CD4-positive, alpha-beta memory T cell (primary cell): ENCODE measurements at regions of chr10 and their contacts with region 1.

Region 1: GRCh38 chr10:101782811-101783735 is at the start of gene NPM3:
- DNase-seq: peak; percentile 70 to 85 (median 73)
- H3K4me3 ChIP-seq: peak within 1 kb of the TSS; percentile 74 to 75
- H3K4me3 Mint-ChIP-seq: peak within 1 kb of the TSS; percentile 99 to 100 (median 100)
- H3K27ac ChIP-seq: peak within 1 kb of the TSS; percentile 58
- H3K27ac Mint-ChIP-seq: peak within 1 kb of the TSS; percentile 87 to 99 (median 96)
- H3K4me1 ChIP-seq: peaks cover 64% of the 10 kb centered on the region
- H3K4me1 Mint-ChIP-seq: peaks cover 38 to 76% (median 59%) of the 10 kb centered on the region in 4 donors
- H3K27me3 ChIP-seq: peaks cover 12% of the 10 kb centered on the region
- H3K27me3 Mint-ChIP-seq: peaks cover 6 to 7% of the 10 kb centered on the region in 2 donors
- total RNA-seq, gene NPM3: 11.1 to 12.4 TPM

Region 2: DNA sequence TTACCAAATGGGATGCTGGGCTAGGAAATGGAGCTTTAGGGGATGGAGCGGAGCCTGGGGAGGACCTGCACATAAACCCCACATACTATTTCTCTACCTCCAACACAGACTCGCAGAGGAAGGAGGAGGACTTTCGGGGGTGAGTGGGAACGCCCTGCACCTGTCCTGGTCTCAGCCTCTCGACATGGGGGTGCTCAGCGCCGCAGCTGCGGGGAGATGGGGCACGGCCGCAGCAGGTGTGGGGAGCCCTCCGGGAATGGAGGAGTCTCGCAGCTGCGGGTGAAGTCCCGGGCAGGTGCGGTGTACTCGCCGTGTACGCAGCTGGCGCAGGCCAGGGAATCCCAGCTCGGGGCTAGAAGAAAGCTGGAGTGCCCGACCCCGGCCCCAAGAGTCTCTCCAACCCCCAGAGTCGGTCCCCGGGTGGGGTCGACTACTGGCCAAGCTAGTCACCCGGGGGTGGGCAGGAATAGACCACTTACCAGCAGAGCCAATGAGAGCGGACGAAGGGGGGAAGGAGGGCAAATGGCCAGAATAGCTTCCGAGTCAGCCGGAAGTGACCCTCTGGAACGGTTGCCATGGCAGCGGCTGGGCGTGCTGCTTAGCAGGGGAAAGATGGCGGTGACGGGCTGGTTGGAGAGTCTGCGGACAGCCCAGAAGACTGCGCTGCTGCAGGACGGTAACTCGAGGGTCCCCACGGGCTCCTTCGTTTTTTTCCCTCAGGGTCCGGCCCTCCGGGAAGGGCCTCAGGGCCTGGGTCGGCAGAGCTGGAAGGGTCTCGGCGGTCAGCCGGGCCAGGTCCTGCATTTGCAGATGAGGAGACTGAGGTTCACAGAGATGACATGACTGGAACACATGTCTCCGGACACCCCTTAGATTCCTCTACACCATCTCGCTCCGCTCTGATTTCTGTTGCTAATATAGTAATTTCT is 195.1 kb before region 1 on chr10 and contains the starts of genes DPCD and POLL:
- CTCF ChIA-PET with region 1: no interaction called
- POLR2A ChIA-PET with region 1: no interaction called
- intact Hi-C with region 1: loop called (anchors 5 kb)
- DNase-seq: peak; percentile 83 to 86 (median 85)
- H3K4me3 ChIP-seq: peak within 1 kb of the TSS; percentile 79 to 81
- H3K4me3 Mint-ChIP-seq: peak within 1 kb of the TSS; percentile 94 to 97 (median 94)
- H3K27ac ChIP-seq: peak within 1 kb of the TSS; percentile 64
- H3K27ac Mint-ChIP-seq: peak within 1 kb of the TSS; percentile 82 to 93 (median 91)
- H3K4me1 ChIP-seq: peaks cover 17% of the 10 kb centered on the region
- H3K4me1 Mint-ChIP-seq: peaks cover 11 to 40% (median 26%) of the 10 kb centered on the region in 4 donors
- H3K27me3 ChIP-seq: no peaks in the 10 kb centered on the region
- H3K27me3 Mint-ChIP-seq: no peaks in the 10 kb centered on the region
- total RNA-seq, gene DPCD: 1.0 to 1.2 TPM
- total RNA-seq, gene POLL: 57.0 to 59.3 TPM

Region 3: GRCh38 chr10:101631821-101632475 is 151.1 kb before region 1 on chr10:
- CTCF ChIA-PET with region 1: no interaction called
- POLR2A ChIA-PET with region 1: no interaction called
- intact Hi-C with region 1: no loop called
- DNase-seq: no peak
- H3K4me3 ChIP-seq: no peak overlapping the region
- H3K4me3 Mint-ChIP-seq: no peak overlapping the region
- H3K27ac ChIP-seq: no peak overlapping the region
- H3K27ac Mint-ChIP-seq: peak overlapping the region in 1 of 7 donors; percentile 71
- H3K4me1 ChIP-seq: no peaks in the 10 kb centered on the region
- H3K4me1 Mint-ChIP-seq: peaks cover 16 to 35% (median 20%) of the 10 kb centered on the region in 4 donors
- H3K27me3 ChIP-seq: no peaks in the 10 kb centered on the region
- H3K27me3 Mint-ChIP-seq: no peaks in the 10 kb centered on the region

Region 4: DNA sequence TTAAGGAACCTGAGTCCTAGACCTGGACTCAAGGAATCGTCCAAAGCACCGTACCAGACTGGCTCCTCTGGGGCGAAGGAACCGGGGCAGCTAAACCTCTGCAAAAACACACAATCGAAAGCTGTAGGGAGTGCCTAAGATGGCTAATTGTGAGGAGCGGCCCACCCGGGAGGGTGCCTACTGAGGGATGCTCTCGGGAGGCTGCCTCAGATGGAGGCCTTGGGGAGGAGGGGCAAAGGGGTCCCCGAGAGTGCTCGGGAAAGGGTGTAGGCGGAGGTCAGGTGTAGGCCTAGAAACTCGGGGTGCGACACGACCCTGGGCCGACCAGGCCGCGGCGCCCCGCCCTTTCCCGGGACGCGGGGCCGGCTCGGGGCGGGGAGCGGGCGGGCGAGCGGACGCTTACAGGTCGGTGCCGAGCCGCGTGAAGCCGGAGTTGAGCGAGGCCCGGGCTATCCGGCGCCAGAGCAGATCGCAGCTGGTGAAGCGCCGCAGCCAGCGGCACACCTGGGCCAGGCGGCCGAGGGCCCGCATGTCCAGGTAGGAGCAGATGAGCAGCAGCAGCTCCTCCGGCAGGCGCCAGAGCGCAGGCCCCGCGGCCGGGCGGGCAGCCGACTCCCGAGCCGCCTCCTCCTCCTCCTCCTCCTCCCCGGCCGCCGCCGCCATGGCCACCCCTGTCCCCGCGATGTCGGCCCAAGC is 88.9 kb before region 1 on chr10:
- CTCF ChIA-PET with region 1: interaction called, 4 read pairs
- POLR2A ChIA-PET with region 1: no interaction called
- intact Hi-C with region 1: loop called (anchors 2 kb)
- DNase-seq: peak; percentile 71 to 76 (median 72)
- H3K4me3 ChIP-seq: peak overlapping the region; percentile 86 to 87
- H3K4me3 Mint-ChIP-seq: peak overlapping the region; percentile 93 to 99 (median 96)
- H3K27ac ChIP-seq: peak overlapping the region; percentile 99
- H3K27ac Mint-ChIP-seq: peak overlapping the region; percentile 97 to 99 (median 99)
- H3K4me1 ChIP-seq: peaks cover 46% of the 10 kb centered on the region
- H3K4me1 Mint-ChIP-seq: peaks cover 32 to 60% (median 41%) of the 10 kb centered on the region in 4 donors
- H3K27me3 ChIP-seq: no peaks in the 10 kb centered on the region
- H3K27me3 Mint-ChIP-seq: no peaks in the 10 kb centered on the region

Region 5: DNA sequence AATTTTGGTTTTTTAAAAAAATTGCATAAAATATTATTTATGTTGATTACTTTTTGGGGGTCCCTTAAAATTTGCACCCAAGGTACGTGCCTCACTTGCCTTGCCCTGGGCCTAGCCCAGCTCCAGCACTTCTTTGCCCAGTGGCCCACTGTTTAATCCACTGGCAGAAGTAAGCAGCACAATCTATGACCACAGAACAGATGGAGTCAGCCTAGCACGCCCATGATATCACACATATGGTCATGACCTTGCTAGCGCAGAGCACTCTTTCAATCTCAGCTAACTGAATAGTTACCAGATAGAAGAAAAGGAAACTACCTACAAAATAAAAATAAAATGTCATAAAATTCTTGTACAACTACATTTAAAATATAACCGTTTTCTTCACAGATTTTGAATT is 29.5 kb after region 1 on chr10:
- CTCF ChIA-PET with region 1: interaction called, 35 read pairs
- POLR2A ChIA-PET with region 1: interaction called, 64 read pairs
- intact Hi-C with region 1: no loop called
- DNase-seq: no peak
- H3K4me3 ChIP-seq: no peak overlapping the region
- H3K4me3 Mint-ChIP-seq: peak overlapping the region in 5 of 8 donors; percentile 13 to 100 (median 44)
- H3K27ac ChIP-seq: no peak overlapping the region
- H3K27ac Mint-ChIP-seq: peak overlapping the region in 2 of 7 donors; percentile 29 to 91
- H3K4me1 ChIP-seq: peaks cover 61% of the 10 kb centered on the region
- H3K4me1 Mint-ChIP-seq: peaks cover 37 to 63% (median 44%) of the 10 kb centered on the region in 4 donors
- H3K27me3 ChIP-seq: no peaks in the 10 kb centered on the region
- H3K27me3 Mint-ChIP-seq: no peaks in the 10 kb centered on the region

Region 6: DNA sequence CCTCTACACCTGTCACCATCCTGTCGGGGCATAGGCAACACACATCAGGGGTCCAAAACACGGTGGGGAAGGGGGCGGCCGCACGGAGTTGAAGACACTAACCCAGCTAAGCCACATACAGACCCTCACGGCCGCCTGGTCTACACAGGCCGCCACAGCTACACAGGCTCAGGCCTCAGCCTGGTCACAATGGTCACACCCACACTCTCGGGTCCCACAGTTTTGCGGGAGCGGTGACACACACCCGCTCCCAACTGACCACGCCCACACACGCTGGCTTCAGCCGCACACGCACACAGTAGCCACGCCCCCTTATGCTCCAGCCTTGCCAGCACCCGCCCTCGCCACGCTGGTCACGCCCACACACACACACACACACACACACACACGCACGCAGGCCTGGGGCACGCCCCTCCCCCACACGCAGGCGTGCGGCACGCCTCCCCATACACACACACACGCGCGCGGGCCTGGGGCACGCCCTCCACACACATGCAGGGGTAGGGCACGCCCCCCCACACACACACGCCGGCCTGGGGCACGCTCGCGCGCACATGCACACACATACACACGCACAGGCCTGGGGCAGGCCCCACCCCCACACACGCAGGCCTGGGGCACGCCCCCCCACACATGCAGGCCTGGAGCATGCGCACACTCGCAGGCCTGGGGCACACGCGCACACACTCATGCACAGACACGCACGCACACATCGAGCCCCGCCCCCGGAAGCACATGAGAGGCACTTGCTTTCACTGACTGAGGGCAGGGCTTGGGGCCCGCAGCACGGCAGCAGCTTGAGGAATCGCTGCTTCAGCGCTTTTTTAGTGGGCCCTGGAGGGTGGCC is 47.5 kb after region 1 on chr10:
- CTCF ChIA-PET with region 1: interaction called, 4 read pairs
- POLR2A ChIA-PET with region 1: interaction called, 13 read pairs
- intact Hi-C with region 1: no loop called
- DNase-seq: peak; percentile 95 to 98 (median 97)
- H3K4me3 ChIP-seq: peak overlapping the region; percentile 57 to 68
- H3K4me3 Mint-ChIP-seq: peak overlapping the region; percentile 84 to 93 (median 88)
- H3K27ac ChIP-seq: peak overlapping the region; percentile 87
- H3K27ac Mint-ChIP-seq: peak overlapping the region; percentile 98 to 100 (median 99)
- H3K4me1 ChIP-seq: peaks cover 59% of the 10 kb centered on the region
- H3K4me1 Mint-ChIP-seq: peaks cover 44 to 80% (median 57%) of the 10 kb centered on the region in 4 donors
- H3K27me3 ChIP-seq: no peaks in the 10 kb centered on the region
- H3K27me3 Mint-ChIP-seq: peaks cover 2 to 7% of the 10 kb centered on the region in 2 donors

Region 7: DNA sequence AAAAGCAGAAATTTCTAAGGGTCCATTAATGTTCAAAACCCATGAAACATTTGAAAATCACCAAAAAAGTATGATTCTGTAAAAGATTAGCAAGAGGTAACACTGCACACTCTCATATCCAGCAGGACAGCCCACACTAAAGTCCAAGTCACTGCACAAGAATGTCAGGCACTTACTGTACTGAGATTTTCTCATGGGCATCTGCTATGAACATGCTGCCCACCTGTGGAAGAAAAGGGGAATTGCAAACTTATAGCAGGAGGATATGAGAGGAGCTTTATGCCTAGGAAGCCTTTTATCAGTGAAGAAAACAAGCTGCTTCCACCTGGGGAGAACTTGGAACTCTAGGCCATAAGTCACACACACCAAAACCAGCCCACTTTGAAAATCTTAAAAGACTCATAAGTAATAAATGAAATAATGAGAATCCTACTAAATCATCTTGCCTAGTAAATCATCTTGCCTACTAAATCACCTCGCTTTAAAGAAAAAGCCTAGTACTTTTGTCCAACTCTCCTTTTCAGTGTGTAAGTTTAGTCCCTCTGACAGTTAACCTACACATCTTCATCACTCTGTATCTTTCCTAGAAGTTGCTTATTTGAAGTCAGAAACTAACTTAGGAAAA is 226.8 kb after region 1 on chr10:
- CTCF ChIA-PET with region 1: interaction called, 11 read pairs
- POLR2A ChIA-PET with region 1: no interaction called
- intact Hi-C with region 1: loop called (anchors 2 kb)
- DNase-seq: peak; percentile 48 to 61 (median 53)
- H3K4me3 ChIP-seq: no peak overlapping the region
- H3K4me3 Mint-ChIP-seq: no peak overlapping the region
- H3K27ac ChIP-seq: no peak overlapping the region
- H3K27ac Mint-ChIP-seq: peak overlapping the region in 4 of 7 donors; percentile 3 to 67 (median 38)
- H3K4me1 ChIP-seq: no peaks in the 10 kb centered on the region
- H3K4me1 Mint-ChIP-seq: peaks cover 0 to 5% (median 4%) of the 10 kb centered on the region in 4 donors
- H3K27me3 ChIP-seq: no peaks in the 10 kb centered on the region
- H3K27me3 Mint-ChIP-seq: no peaks in the 10 kb centered on the region